GM12878 (cell line): ENCODE measurements at regions of chr2 and their contacts with region 1.

Region 1: DNA sequence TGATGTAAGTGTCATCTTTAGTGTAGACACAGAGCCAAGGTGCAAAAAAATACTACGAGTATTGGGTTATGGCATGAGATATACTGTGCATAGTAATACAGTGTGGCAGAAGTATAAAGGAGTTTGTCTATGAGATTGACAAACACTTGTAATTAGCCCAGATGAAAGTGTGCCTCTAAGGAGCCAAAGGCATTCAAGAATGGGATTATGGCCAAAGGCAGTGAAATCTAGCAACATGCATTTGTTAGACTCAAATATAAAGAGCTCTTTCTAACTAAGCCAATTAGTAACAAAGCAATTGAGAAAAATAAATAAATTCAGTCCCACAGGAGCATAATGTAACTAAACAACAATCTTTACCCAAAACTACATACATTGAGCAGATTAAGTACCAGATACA is 1761.8 kb downstream of the SUCLG1 start:
- DNase-seq: no peak
- ATAC-seq: no peak
- H3K4me3 ChIP-seq: no peak overlapping the region
- H3K27ac ChIP-seq: no peak overlapping the region
- H3K4me1 ChIP-seq: no peaks in the 10 kb centered on the region
- H3K27me3 ChIP-seq: no peaks in the 10 kb centered on the region
- CTCF ChIP-seq: no peak
- EP300 ChIP-seq: no peak
- POLR2A ChIP-seq: no peak
- RAD21 ChIP-seq: no peak

Region 2: DNA sequence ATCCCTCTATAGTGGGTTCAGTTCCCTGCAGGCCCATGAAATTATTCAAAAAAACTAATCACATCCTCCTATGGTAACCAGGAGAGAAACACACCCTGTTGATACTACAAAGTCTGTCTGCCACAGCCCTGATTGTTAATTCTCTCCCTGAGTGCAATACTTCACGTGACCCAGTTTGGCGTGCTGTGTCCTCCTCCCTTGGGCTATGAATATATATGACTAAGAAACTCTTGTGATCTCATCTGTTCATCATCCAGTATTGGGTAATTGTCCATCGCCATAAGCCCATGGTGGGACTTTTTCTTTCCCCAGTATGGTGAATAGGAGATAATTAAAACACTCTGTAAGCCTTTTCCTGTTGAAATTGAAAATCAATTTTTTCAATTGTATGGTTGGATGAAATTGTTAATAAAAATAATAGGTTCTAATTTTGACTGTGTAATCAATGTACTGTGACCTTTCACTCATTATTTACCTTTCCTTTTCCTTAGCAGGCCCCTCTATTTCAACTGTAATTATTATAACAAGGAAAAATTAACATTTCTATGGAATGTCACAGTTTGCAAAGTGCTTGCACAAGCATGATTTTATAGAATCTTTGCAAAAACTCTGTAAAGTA is 60.7 kb before region 1 on chr2:
- CTCF ChIA-PET with region 1: no interaction called
- POLR2A ChIA-PET with region 1: no interaction called
- RAD21 ChIA-PET with region 1: no interaction called
- SMC1A ChIA-PET with region 1: no interaction called
- in situ Hi-C with region 1: no loop called
- intact Hi-C with region 1: no loop called
- DNase-seq: no peak
- ATAC-seq: no peak
- H3K4me3 ChIP-seq: no peak overlapping the region
- H3K27ac ChIP-seq: no peak overlapping the region
- H3K4me1 ChIP-seq: no peaks in the 10 kb centered on the region
- H3K27me3 ChIP-seq: no peaks in the 10 kb centered on the region
- CTCF ChIP-seq: no peak
- EP300 ChIP-seq: no peak
- POLR2A ChIP-seq: no peak
- RAD21 ChIP-seq: no peak

Region 3: GRCh38 chr2:82730811-82731210 is 33.6 kb after region 1 on chr2:
- CTCF ChIA-PET with region 1: no interaction called
- POLR2A ChIA-PET with region 1: no interaction called
- RAD21 ChIA-PET with region 1: no interaction called
- SMC1A ChIA-PET with region 1: no interaction called
- in situ Hi-C with region 1: no loop called
- intact Hi-C with region 1: loop called (anchors 1 kb)
- DNase-seq: no peak
- ATAC-seq: no peak
- H3K4me3 ChIP-seq: no peak overlapping the region
- H3K27ac ChIP-seq: no peak overlapping the region
- H3K4me1 ChIP-seq: no peaks in the 10 kb centered on the region
- H3K27me3 ChIP-seq: no peaks in the 10 kb centered on the region
- CTCF ChIP-seq: no peak
- EP300 ChIP-seq: no peak
- POLR2A ChIP-seq: no peak
- RAD21 ChIP-seq: no peak